ENCODE measurements at regions of chr11 and their contacts with region 1.

Region 1: DNA sequence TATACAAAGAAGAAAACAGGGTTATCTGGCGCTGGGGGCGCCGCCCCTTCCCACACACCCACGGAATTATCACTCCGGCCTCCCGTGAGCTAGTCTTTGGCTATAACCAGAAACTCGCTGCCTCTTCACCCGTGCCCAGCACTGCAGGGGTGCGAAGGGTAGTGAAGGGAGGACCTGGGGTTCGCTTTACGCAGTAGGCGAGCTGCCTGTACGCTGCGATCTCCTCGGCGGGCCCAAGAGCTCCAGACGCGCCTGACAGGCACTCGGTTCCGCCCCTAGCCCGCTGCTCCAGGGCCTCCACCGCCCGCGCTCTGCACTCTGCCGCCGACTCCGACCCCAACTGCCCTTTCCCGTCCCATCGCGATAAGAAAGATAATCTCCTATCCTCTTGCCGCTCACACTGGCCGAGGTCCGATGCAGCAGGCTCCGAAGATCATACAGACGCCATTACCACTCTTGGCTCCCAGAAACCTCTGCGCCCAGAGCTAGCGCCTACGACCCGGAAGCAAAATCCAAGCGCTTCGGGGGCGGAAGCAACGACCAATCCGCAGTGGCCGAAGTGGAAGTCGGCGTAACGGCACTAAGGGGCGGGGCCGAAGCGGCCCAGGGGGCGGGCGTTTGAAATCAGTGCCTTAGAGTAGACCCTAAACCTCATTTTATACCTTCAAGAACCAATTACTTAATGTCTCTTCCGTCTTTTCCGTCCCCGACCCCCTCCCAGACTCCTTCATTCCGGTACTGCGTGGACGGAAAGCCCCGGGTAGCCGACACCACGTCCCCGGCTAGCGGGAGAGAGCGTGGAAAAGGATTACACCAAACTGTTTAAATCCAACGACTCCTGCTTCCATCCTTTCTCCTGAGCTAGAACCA is at the starts of genes CWC15 and KDM4D:
- DNase-seq: peak; percentile 84 to 94 (median 92)
- ATAC-seq: peak; percentile 100
- H3K4me3 ChIP-seq: peak within 1 kb of the TSS; percentile 81
- H3K4me3 Mint-ChIP-seq: peak within 1 kb of the TSS; percentile 88 to 100 (median 96)
- H3K27ac ChIP-seq: peak within 1 kb of the TSS; percentile 91
- H3K27ac Mint-ChIP-seq: peak within 1 kb of the TSS; percentile 92 to 100 (median 96)
- H3K4me1 ChIP-seq: peaks cover 9 to 13% of the 10 kb centered on the region in 2 donors
- H3K4me1 Mint-ChIP-seq: peaks cover 17 to 63% (median 39%) of the 10 kb centered on the region in 7 donors
- H3K27me3 ChIP-seq: no peaks in the 10 kb centered on the region
- H3K27me3 Mint-ChIP-seq: no peaks in the 10 kb centered on the region
- total RNA-seq, gene CWC15: 64.1 to 94.7 (median 66.8) TPM
- total RNA-seq, gene KDM4D: 0.32 to 0.70 (median 0.68) TPM

Region 2: DNA sequence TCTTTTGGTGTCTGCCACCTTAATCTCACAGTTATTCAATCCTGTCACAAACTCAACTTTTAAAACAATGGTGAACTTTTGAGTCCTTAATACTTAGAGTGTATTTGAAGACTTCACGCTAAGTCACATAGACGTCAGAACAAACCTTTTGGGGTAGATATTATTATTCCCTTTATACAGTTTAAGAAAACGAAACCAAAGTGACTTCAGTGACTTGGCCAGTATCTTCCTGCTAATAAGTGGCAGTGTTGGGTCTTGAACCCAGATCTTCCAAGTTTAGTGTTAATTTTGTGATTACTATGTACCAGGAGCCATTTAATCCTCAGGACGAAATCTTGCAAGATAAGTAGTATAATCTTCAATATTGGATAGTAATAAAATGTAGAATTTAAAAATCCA is 1311.2 kb before region 1 on chr11:
- CTCF ChIA-PET with region 1: no interaction called
- POLR2A ChIA-PET with region 1: no interaction called
- intact Hi-C with region 1: loop called in 1 of 2 experiments (anchors 1 kb)
- DNase-seq: no peak
- ATAC-seq: no peak
- H3K4me3 ChIP-seq: peak overlapping the region; percentile 98
- H3K4me3 Mint-ChIP-seq: peak overlapping the region; percentile 76 to 96 (median 88)
- H3K27ac ChIP-seq: peak overlapping the region; percentile 88
- H3K27ac Mint-ChIP-seq: peak overlapping the region; percentile 60 to 95 (median 90)
- H3K4me1 ChIP-seq: peaks cover 8 to 11% of the 10 kb centered on the region in 2 donors
- H3K4me1 Mint-ChIP-seq: peaks cover 0 to 52% (median 37%) of the 10 kb centered on the region in 7 donors
- H3K27me3 ChIP-seq: no peaks in the 10 kb centered on the region
- H3K27me3 Mint-ChIP-seq: peaks cover 0 to 2% (median 0%) of the 10 kb centered on the region in 5 donors

Region 3: GRCh38 chr11:94493281-94494125 is 479.8 kb before region 1 on chr11 and contains the starts of genes ANKRD49 and MRE11:
- CTCF ChIA-PET with region 1: no interaction called
- POLR2A ChIA-PET with region 1: no interaction called
- intact Hi-C with region 1: loop called (anchors 1 kb)
- DNase-seq: peak; percentile 92 to 98 (median 97)
- ATAC-seq: peak; percentile 100
- H3K4me3 ChIP-seq: peak within 1 kb of the TSS; percentile 94
- H3K4me3 Mint-ChIP-seq: peak within 1 kb of the TSS; percentile 92 to 99 (median 96)
- H3K27ac ChIP-seq: peak within 1 kb of the TSS; percentile 93
- H3K27ac Mint-ChIP-seq: peak within 1 kb of the TSS; percentile 91 to 99 (median 97)
- H3K4me1 ChIP-seq: peaks cover 18 to 28% of the 10 kb centered on the region in 2 donors
- H3K4me1 Mint-ChIP-seq: peaks cover 31 to 64% (median 42%) of the 10 kb centered on the region in 7 donors
- H3K27me3 ChIP-seq: no peaks in the 10 kb centered on the region
- H3K27me3 Mint-ChIP-seq: no peaks in the 10 kb centered on the region
- total RNA-seq, gene ANKRD49: 25.6 to 64.4 (median 44.5) TPM
- total RNA-seq, gene MRE11: 19.0 to 45.5 (median 40.1) TPM

Region 4: GRCh38 chr11:94925422-94926270 is 47.7 kb before region 1 on chr11:
- CTCF ChIA-PET with region 1: interaction called, 3 read pairs
- POLR2A ChIA-PET with region 1: interaction called, 12 read pairs
- intact Hi-C with region 1: loop called (anchors 1 to 2 kb)
- DNase-seq: peak in 3 of 9 donors; percentile 9 to 27 (median 26)
- ATAC-seq: no peak
- H3K4me3 ChIP-seq: peak overlapping the region; percentile 25
- H3K4me3 Mint-ChIP-seq: peak overlapping the region; percentile 50 to 82 (median 69)
- H3K27ac ChIP-seq: no peak overlapping the region
- H3K27ac Mint-ChIP-seq: peak overlapping the region; percentile 76 to 96 (median 88)
- H3K4me1 ChIP-seq: peaks cover 27 to 50% of the 10 kb centered on the region in 2 donors
- H3K4me1 Mint-ChIP-seq: peaks cover 33 to 92% (median 77%) of the 10 kb centered on the region in 7 donors
- H3K27me3 ChIP-seq: no peaks in the 10 kb centered on the region
- H3K27me3 Mint-ChIP-seq: peaks cover 0 to 2% (median 0%) of the 10 kb centered on the region in 5 donors

Region 5: DNA sequence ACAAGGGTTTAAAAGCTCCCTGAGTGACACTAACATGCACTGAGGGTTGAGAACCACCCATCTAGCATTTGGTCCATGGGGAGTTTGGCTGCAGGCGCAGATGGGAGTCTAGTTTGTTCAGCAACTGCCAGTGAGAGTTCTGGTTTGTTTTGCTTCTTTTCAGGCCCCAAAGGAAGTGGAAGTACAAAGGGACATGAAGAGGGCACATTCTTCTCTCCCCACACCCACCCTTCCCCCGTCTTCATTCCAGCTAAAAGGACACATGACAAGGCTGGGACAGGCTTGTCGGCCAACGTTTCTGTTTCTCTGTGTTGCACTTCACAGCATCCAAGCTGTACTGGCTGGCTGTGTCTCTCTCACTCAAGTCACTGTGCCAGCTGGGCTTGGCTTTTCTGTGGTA is 108.1 kb after region 1 on chr11:
- CTCF ChIA-PET with region 1: no interaction called
- POLR2A ChIA-PET with region 1: no interaction called
- intact Hi-C with region 1: no loop called
- DNase-seq: no peak
- ATAC-seq: no peak
- H3K4me3 ChIP-seq: no peak overlapping the region
- H3K4me3 Mint-ChIP-seq: no peak overlapping the region
- H3K27ac ChIP-seq: no peak overlapping the region
- H3K27ac Mint-ChIP-seq: no peak overlapping the region
- H3K4me1 ChIP-seq: peaks cover 0 to 7% of the 10 kb centered on the region in 2 donors
- H3K4me1 Mint-ChIP-seq: peaks cover 0 to 44% (median 3%) of the 10 kb centered on the region in 7 donors
- H3K27me3 ChIP-seq: no peaks in the 10 kb centered on the region
- H3K27me3 Mint-ChIP-seq: no peaks in the 10 kb centered on the region

Region 6: DNA sequence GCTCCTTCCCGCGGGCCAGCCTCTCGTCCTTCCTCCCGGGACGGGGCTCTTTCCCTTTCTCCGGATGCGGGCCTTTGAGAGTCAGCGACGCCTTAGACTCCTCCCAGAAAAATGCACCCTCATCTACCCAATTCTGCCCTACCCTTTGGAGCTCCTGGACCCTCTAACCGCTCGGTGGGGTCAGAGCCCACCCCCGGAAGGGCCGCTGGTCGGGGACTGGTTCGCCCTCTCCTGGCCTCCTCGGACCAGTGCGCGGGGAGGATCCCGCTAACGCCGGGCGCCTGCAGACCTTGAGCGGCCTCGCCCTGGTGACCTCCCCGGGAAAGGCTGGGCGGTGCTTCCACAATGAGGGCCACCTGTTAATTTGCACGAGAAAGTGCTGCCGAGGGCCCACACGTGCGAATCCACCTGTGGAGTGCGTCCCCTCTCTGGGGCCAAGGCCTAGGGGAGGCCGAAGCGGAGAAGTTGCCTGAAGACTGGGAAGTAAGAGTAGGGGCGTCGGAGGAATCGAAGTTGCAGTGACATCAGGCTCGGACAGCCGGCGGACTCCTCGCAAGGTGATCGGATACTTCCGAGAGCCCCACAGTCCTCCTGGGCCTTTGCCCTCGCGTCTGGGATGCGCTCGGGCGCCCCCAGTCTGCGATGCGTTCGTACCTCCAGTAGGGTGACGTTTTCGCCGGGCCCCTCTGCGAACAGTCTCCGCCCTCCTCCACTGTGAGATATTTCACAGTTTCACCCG is 177.8 kb after region 1 on chr11:
- CTCF ChIA-PET with region 1: interaction called, 4 read pairs
- POLR2A ChIA-PET with region 1: no interaction called
- intact Hi-C with region 1: loop called (anchors 1 kb)
- DNase-seq: peak; percentile 74 to 93 (median 90)
- ATAC-seq: peak; percentile 97
- H3K4me3 ChIP-seq: peak overlapping the region; percentile 91
- H3K4me3 Mint-ChIP-seq: peak overlapping the region; percentile 81 to 92 (median 88)
- H3K27ac ChIP-seq: peak overlapping the region; percentile 75
- H3K27ac Mint-ChIP-seq: peak overlapping the region; percentile 92 to 99 (median 96)
- H3K4me1 ChIP-seq: peaks cover 19 to 22% of the 10 kb centered on the region in 2 donors
- H3K4me1 Mint-ChIP-seq: peaks cover 22 to 53% (median 32%) of the 10 kb centered on the region in 7 donors
- H3K27me3 ChIP-seq: no peaks in the 10 kb centered on the region
- H3K27me3 Mint-ChIP-seq: peaks cover 0 to 5% (median 3%) of the 10 kb centered on the region in 5 donors

Region 7: DNA sequence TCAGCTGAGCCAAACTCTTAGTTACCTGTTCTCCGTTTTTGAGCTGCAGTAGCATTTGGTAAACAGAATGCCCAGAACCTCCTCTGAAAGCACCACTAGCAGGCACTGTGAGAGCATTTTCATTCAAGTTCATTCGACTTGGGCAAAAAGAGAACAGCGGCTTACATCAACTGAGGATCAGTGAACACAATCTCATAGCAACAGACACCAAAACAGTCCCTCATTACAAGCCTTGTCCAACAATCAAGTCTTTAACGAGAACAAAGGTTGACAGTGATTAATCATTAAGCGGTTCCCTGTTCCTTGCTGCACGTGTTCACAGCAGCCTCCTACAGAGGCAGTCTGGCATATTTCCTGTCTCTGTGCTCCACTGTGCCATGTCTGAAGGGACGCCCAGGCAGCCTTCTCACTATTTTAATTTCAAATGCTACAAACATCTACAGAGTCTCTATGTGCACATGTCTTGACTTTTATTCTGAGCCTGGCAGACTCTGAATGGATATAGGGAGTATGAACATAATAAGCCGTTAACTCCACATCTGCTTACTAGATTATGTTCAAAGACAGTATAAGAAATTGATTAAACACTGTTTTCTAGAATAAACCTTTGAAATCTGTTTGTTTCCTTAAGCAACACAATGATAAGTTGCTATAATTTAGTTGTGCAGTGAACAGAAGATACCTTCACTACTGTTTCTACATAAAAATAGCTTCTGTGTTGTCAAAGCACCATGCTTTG is 1038.9 kb after region 1 on chr11:
- CTCF ChIA-PET with region 1: no interaction called
- POLR2A ChIA-PET with region 1: interaction called, 5 read pairs
- intact Hi-C with region 1: loop called in 1 of 2 experiments (anchors 2 kb)
- DNase-seq: peak in 8 of 9 donors; percentile 23 to 89 (median 80)
- ATAC-seq: peak; percentile 83
- H3K4me3 ChIP-seq: no peak overlapping the region
- H3K4me3 Mint-ChIP-seq: peak overlapping the region; percentile 58 to 87 (median 71)
- H3K27ac ChIP-seq: peak overlapping the region; percentile 58
- H3K27ac Mint-ChIP-seq: peak overlapping the region in 6 of 9 donors; percentile 76 to 98 (median 96)
- H3K4me1 ChIP-seq: peaks cover 39 to 52% of the 10 kb centered on the region in 2 donors
- H3K4me1 Mint-ChIP-seq: peaks cover 12 to 50% (median 28%) of the 10 kb centered on the region in 7 donors
- H3K27me3 ChIP-seq: no peaks in the 10 kb centered on the region
- H3K27me3 Mint-ChIP-seq: no peaks in the 10 kb centered on the region

Measured in naive thymus-derived CD4-positive, alpha-beta T cell (primary cell).